PC-3 (cell line): ENCODE measurements at regions of chr22 and their contacts with region 1.

Region 1: DNA sequence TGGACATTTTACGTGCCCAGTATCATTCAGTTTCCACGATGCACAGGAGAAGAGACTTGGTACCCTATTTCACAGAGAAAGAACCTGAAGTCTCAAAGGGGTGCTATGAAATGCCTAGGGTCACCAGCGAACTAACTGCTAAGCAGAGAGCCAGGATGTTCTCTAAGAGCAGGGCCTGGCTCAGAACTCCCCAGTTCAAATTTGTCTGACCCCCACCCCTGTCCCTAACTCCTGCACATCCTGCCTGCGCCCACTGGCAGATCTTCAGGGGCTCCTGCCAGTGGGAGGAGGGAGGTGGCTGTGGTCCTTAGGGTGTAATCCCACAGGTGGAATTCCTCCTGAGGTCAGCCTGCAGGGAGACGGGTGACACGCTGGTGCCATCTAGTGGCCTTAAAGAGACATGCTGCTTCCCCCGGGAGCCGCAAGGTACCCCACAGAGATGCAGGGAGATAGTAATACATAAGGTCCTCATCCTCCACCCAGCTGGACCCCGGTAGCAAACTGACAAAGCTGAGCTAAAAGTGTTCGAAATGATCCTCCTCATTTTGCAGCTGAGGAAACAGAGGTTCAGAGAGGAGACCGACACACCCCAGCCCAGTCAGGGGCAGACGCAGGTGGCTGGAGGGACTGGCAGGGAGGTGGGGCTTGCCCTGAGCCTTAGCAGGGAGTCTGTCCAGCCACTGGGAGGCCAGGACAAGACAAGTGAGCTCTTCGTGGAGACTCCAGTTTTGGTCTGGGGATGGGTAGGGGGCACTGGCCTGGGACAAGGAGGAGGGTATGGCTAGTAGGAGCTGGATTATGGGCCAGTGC is 34.1 kb downstream of the MB start:
- DNase-seq: peak; percentile 70
- ATAC-seq: peak; percentile 85
- H3K4me3 ChIP-seq: no peak overlapping the region
- H3K27ac ChIP-seq: no peak overlapping the region
- H3K4me1 ChIP-seq: peaks cover 18% of the 10 kb centered on the region
- H3K27me3 ChIP-seq: no peaks in the 10 kb centered on the region
- CTCF ChIP-seq: peak; percentile 84

Region 2: DNA sequence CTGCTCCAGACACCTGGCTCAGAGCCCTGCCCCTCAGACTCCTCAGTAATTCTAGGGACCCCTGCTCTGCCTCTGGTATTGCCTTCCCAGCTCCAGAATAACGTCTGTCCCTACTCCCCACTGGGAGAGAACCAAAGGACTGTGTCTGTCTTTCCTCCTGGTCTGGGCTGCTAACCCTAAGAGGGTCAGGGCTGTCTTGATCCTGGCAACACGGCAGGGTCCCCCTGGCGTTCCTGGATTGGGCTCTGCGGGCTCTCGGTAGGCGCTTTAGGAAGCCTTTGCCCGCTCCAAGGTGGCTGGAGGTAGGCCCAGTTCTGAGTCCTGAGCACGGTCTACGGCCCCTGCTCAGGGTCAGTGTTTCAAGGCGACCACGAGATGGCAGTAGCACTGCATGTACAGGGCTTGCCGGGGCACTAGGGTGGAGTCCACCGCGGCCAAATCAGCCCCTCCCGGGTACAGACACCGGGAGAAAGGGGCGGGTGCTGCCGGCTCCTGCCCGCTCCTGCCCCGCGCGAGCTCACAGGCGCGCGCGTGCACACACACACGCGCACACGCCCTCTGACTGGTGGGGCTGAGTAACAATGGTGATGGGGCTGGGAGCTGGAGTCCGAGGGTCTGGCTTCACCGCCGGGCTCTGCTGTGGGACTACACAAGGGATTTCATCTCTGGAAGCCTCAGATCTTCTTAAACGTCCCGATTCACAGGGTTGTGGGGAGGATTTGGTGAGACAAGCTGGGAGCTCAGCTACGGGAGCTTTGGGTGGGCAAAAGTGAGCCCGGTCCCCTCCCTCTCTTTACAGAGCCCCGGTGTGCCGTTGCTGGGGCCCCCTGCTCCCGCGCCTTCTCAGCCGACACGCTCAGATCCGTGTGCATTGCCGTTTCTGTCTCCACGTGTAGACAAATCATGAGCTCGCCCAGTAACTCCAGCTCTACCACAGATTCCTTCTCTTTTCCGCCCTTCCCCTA is 232.2 kb before region 1 on chr22:
- CTCF ChIA-PET with region 1: interaction called, 7 read pairs
- POLR2A ChIA-PET with region 1: interaction called, 3 read pairs
- intact Hi-C with region 1: loop called (anchors 1 kb)
- DNase-seq: peak; percentile 81
- ATAC-seq: peak; percentile 95
- H3K4me3 ChIP-seq: peak overlapping the region; percentile 70
- H3K27ac ChIP-seq: peak overlapping the region; percentile 52
- H3K4me1 ChIP-seq: peaks cover 11% of the 10 kb centered on the region
- H3K27me3 ChIP-seq: no peaks in the 10 kb centered on the region
- CTCF ChIP-seq: peak; percentile 69